ENCODE measurements at regions of chr3 and their contacts with region 1.

Region 1: GRCh38 chr3:25648107-25648535 is 16.6 kb downstream of the TOP2B start:
- DNase-seq: peak; percentile 76 to 84
- H3K4me3 ChIP-seq: no peak overlapping the region
- H3K4me3 Mint-ChIP-seq: no peak overlapping the region
- H3K27ac Mint-ChIP-seq: no peak overlapping the region
- H3K4me1 ChIP-seq: no peaks in the 10 kb centered on the region
- H3K4me1 Mint-ChIP-seq: peaks cover 8% of the 10 kb centered on the region
- H3K27me3 ChIP-seq: no peaks in the 10 kb centered on the region
- H3K27me3 Mint-ChIP-seq: no peaks in the 10 kb centered on the region
- CTCF ChIP-seq: peak; percentile 79 to 87

Region 2: GRCh38 chr3:25558111-25558510 is 90.0 kb before region 1 on chr3:
- CTCF ChIA-PET with region 1: no interaction called
- POLR2A ChIA-PET with region 1: no interaction called
- intact Hi-C with region 1: no loop called
- DNase-seq: no peak
- H3K4me3 ChIP-seq: no peak overlapping the region
- H3K4me3 Mint-ChIP-seq: no peak overlapping the region
- H3K27ac Mint-ChIP-seq: no peak overlapping the region
- H3K4me1 ChIP-seq: no peaks in the 10 kb centered on the region
- H3K4me1 Mint-ChIP-seq: no peaks in the 10 kb centered on the region
- H3K27me3 ChIP-seq: no peaks in the 10 kb centered on the region
- H3K27me3 Mint-ChIP-seq: no peaks in the 10 kb centered on the region
- CTCF ChIP-seq: no peak

Region 3: DNA sequence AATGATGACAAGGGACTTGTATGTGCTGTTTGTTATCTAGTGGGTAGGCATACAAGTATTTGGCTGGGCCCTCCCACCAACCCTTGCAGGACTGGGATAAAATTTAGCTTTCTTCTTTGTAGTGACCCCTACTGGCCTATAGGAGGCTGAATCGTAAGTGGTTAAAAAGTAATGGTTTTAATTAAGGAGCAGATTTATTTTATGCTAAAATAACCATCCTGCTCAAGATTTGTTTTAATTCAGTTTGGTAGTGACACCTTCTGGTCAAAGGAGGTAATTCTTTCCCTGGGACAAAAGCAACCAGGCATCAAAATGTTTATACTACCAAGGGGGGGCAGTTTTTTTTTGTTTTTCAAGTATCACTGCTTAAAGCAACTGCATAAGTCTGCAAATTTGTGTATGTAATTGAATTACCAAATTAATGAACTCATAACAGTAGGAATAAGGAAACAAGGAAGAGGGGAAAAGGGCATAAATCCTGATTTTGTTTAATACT is 54.1 kb before region 1 on chr3:
- CTCF ChIA-PET with region 1: no interaction called
- POLR2A ChIA-PET with region 1: no interaction called
- intact Hi-C with region 1: no loop called
- DNase-seq: peak in 1 of 2 experiments; percentile 49
- H3K4me3 ChIP-seq: no peak overlapping the region
- H3K4me3 Mint-ChIP-seq: no peak overlapping the region
- H3K27ac Mint-ChIP-seq: no peak overlapping the region
- H3K4me1 ChIP-seq: peaks cover 8% of the 10 kb centered on the region; the same call in 1 of the 2 replicates
- H3K4me1 Mint-ChIP-seq: no peaks in the 10 kb centered on the region
- H3K27me3 ChIP-seq: no peaks in the 10 kb centered on the region
- H3K27me3 Mint-ChIP-seq: no peaks in the 10 kb centered on the region
- CTCF ChIP-seq: peak; percentile 65 to 83

Region 4: GRCh38 chr3:25725813-25726210 is 77.7 kb after region 1 on chr3:
- CTCF ChIA-PET with region 1: no interaction called
- POLR2A ChIA-PET with region 1: no interaction called
- intact Hi-C with region 1: loop called (anchors 5 kb)
- DNase-seq: no peak
- H3K4me3 ChIP-seq: no peak overlapping the region
- H3K4me3 Mint-ChIP-seq: no peak overlapping the region
- H3K27ac Mint-ChIP-seq: no peak overlapping the region
- H3K4me1 ChIP-seq: 0 out of 2 replicates have a peak, but pooled peaks cover 3% of the 10 kb centered on the region
- H3K4me1 Mint-ChIP-seq: no peaks in the 10 kb centered on the region
- H3K27me3 ChIP-seq: no peaks in the 10 kb centered on the region
- H3K27me3 Mint-ChIP-seq: no peaks in the 10 kb centered on the region
- CTCF ChIP-seq: no peak

Region 5: GRCh38 chr3:25768851-25769250 is 120.7 kb after region 1 on chr3:
- CTCF ChIA-PET with region 1: no interaction called
- POLR2A ChIA-PET with region 1: no interaction called
- intact Hi-C with region 1: no loop called
- DNase-seq: no peak
- H3K4me3 ChIP-seq: no peak overlapping the region
- H3K4me3 Mint-ChIP-seq: no peak overlapping the region
- H3K27ac Mint-ChIP-seq: no peak overlapping the region
- H3K4me1 ChIP-seq: no peaks in the 10 kb centered on the region
- H3K4me1 Mint-ChIP-seq: no peaks in the 10 kb centered on the region
- H3K27me3 ChIP-seq: no peaks in the 10 kb centered on the region
- H3K27me3 Mint-ChIP-seq: no peaks in the 10 kb centered on the region
- CTCF ChIP-seq: no peak

Region 6: GRCh38 chr3:25831578-25831977 is 183.5 kb after region 1 on chr3:
- CTCF ChIA-PET with region 1: no interaction called
- POLR2A ChIA-PET with region 1: no interaction called
- intact Hi-C with region 1: loop called (anchors 1 kb)
- DNase-seq: no peak
- H3K4me3 ChIP-seq: no peak overlapping the region
- H3K4me3 Mint-ChIP-seq: no peak overlapping the region
- H3K27ac Mint-ChIP-seq: no peak overlapping the region
- H3K4me1 ChIP-seq: no peaks in the 10 kb centered on the region
- H3K4me1 Mint-ChIP-seq: no peaks in the 10 kb centered on the region
- H3K27me3 ChIP-seq: no peaks in the 10 kb centered on the region; the same call in 1 of the 2 replicates
- H3K27me3 Mint-ChIP-seq: peaks cover 3% of the 10 kb centered on the region
- CTCF ChIP-seq: no peak

Region 7: GRCh38 chr3:25897019-25897418 is 248.9 kb after region 1 on chr3:
- CTCF ChIA-PET with region 1: no interaction called
- POLR2A ChIA-PET with region 1: no interaction called
- intact Hi-C with region 1: loop called (anchors 1 kb)
- DNase-seq: peak; percentile 48 to 58
- H3K4me3 ChIP-seq: no peak overlapping the region
- H3K4me3 Mint-ChIP-seq: no peak overlapping the region
- H3K27ac Mint-ChIP-seq: no peak overlapping the region
- H3K4me1 ChIP-seq: no peaks in the 10 kb centered on the region
- H3K4me1 Mint-ChIP-seq: no peaks in the 10 kb centered on the region
- H3K27me3 ChIP-seq: no peaks in the 10 kb centered on the region
- H3K27me3 Mint-ChIP-seq: no peaks in the 10 kb centered on the region
- CTCF ChIP-seq: peak; percentile 40 to 79

Region 8: DNA sequence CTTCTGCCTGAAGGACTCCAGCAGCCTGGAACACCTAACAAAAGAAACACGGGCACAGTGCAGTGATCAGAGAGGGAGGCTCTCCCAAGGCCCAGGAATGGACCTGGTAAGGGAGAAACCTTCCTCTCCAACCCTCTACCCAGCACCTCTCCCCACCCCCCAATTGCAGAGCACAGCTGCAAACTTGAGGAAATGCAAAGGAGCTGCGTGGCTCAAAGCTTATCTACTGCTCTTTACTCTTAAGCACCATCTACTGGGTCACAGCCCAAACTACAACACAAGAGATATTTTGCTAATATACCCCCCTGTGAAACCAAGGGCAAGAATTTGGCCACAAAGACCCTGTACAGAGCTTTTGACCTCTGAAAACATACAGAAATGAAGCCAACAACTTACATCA is 470.0 kb after region 1 on chr3:
- CTCF ChIA-PET with region 1: no interaction called
- POLR2A ChIA-PET with region 1: no interaction called
- intact Hi-C with region 1: loop called (anchors 5 kb)
- DNase-seq: peak in 1 of 2 experiments; percentile 7
- H3K4me3 ChIP-seq: no peak overlapping the region
- H3K4me3 Mint-ChIP-seq: no peak overlapping the region
- H3K27ac Mint-ChIP-seq: no peak overlapping the region
- H3K4me1 ChIP-seq: no peaks in the 10 kb centered on the region
- H3K4me1 Mint-ChIP-seq: no peaks in the 10 kb centered on the region
- H3K27me3 ChIP-seq: no peaks in the 10 kb centered on the region
- H3K27me3 Mint-ChIP-seq: no peaks in the 10 kb centered on the region
- CTCF ChIP-seq: no peak

Measured in Caco-2 (cell line).